GM12878 (cell line): ENCODE measurements at regions of chr17 and their contacts with region 1.

Region 1: DNA sequence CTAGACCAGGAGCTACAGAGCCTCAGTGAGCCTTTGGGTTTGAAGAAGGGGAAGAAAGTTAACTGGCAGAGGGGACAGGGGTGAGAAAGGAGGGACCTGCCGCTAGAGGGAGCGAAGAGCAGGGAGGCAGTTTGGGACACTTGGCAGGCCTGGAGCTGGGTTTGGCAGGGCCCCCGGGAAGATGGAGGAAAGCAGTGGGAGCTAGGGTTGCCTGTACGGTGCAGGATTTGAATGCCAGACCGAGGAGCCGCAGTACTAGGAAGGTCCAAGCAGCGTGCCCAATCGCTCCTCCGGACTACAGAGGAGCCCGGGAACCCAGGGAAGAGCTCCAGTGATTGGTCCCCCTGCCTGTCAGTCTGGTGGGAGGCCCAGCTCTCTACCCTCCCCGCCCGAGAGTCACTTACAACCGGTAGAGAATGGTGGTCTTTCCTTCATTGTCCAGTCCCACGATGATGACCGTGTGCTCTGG is 1.3 kb downstream of the ARL5C start:
- DNase-seq: peak; percentile 53
- ATAC-seq: peak; percentile 98
- H3K4me3 ChIP-seq: peak overlapping the region; percentile 71
- H3K27ac ChIP-seq: no peak overlapping the region
- H3K4me1 ChIP-seq: peaks cover 9% of the 10 kb centered on the region
- H3K27me3 ChIP-seq: peaks cover 0 to 2% of the 10 kb centered on the region in 2 experiments; a peak in 2 of 4 replicates
- CTCF ChIP-seq: peak; percentile 83 to 95 (median 89)
- EP300 ChIP-seq: no peak
- POLR2A ChIP-seq: no peak
- RAD21 ChIP-seq: peak; percentile 33; the same call in 1 of the 2 replicates

Region 2: GRCh38 chr17:39118674-39119419 is 45.9 kb before region 1 on chr17:
- CTCF ChIA-PET with region 1: interaction called, 12 read pairs
- POLR2A ChIA-PET with region 1: no interaction called
- RAD21 ChIA-PET with region 1: no interaction called
- SMC1A ChIA-PET with region 1: interaction called, 4 read pairs
- in situ Hi-C with region 1: no loop called
- intact Hi-C with region 1: no loop called
- DNase-seq: peak; percentile 84
- ATAC-seq: peak; percentile 97
- H3K4me3 ChIP-seq: no peak overlapping the region
- H3K27ac ChIP-seq: no peak overlapping the region
- H3K4me1 ChIP-seq: peaks cover 13% of the 10 kb centered on the region
- H3K27me3 ChIP-seq: no peaks in the 10 kb centered on the region
- CTCF ChIP-seq: no peak
- EP300 ChIP-seq: peak; percentile 33 to 85; a peak in 2 of 4 replicates
- POLR2A ChIP-seq: no peak
- RAD21 ChIP-seq: no peak

Region 3: DNA sequence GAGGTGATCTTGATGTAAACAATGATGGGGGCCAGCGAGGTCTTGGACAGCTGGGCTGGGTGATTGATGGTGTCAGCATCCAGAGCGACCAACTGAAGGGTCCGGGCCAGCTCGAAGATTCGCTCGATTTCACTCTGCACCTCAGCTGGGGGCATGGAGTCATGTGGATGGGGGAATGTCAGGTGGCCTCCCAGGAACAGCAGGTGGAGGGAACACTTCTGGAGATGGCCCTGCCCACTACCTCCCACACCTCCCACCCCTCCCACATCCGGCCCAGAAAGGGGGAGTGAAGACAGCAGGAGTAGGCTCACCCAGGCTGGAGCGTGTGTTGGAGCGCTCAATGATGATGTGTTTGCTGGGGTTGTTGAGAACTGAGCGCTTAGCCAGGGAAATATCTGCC is 19.0 kb after region 1 on chr17:
- CTCF ChIA-PET with region 1: interaction called, 21 read pairs
- POLR2A ChIA-PET with region 1: no interaction called
- RAD21 ChIA-PET with region 1: interaction called, 3 read pairs
- SMC1A ChIA-PET with region 1: no interaction called
- in situ Hi-C with region 1: no loop called
- intact Hi-C with region 1: no loop called
- DNase-seq: no peak
- ATAC-seq: no peak
- H3K4me3 ChIP-seq: no peak overlapping the region
- H3K27ac ChIP-seq: no peak overlapping the region
- H3K4me1 ChIP-seq: no peaks in the 10 kb centered on the region
- H3K27me3 ChIP-seq: no peaks in the 10 kb centered on the region
- CTCF ChIP-seq: no peak
- EP300 ChIP-seq: no peak
- POLR2A ChIP-seq: no peak
- RAD21 ChIP-seq: no peak

Region 4: DNA sequence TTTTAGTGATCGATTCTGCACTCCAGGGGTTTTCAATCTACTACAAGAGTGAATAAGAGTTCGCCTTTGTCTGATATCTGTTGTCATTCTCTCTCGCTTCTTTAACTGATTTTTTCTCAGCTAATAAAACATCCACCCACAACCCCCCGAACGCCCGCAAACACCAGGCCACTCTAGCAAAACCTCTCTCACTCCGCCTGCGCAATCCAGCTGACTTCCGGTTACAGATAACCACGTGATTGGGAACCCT is 35.0 kb after region 1 on chr17:
- CTCF ChIA-PET with region 1: interaction called, 20 read pairs
- POLR2A ChIA-PET with region 1: interaction called, 4 read pairs
- RAD21 ChIA-PET with region 1: interaction called, 11 read pairs
- SMC1A ChIA-PET with region 1: interaction called, 3 read pairs
- in situ Hi-C with region 1: no loop called
- intact Hi-C with region 1: no loop called
- DNase-seq: peak; percentile 81
- ATAC-seq: peak; percentile 65
- H3K4me3 ChIP-seq: peak overlapping the region; percentile 95
- H3K27ac ChIP-seq: peak overlapping the region; percentile 100
- H3K4me1 ChIP-seq: peaks cover 27% of the 10 kb centered on the region
- H3K27me3 ChIP-seq: no peaks in the 10 kb centered on the region
- CTCF ChIP-seq: no peak
- EP300 ChIP-seq: no peak
- POLR2A ChIP-seq: no peak
- RAD21 ChIP-seq: no peak

Region 5: DNA sequence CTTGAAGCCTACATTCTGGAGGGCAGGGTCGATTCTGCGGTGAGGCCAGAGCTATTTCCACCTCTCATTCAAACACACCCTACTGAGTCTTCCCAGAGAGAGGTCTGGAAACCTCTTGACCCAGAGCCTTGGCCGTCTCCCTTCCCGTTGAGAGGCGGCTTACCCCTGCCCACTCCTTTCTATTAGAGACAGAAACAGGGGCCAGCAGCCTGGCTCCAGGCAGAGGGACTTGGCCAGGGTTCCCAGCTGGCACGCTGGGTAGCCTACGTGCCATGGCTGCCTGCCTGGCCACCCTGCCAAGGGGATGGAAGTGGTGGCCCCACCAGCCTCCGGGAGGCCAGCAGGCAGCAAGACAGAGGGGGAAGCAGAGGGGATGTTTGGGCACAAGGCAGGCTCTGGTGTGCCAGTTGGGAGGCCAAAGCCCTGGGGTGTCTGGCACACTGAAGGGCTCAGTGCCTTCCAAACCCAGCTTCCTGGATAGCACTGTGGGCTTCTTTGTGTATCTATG is 55.0 kb after region 1 on chr17:
- CTCF ChIA-PET with region 1: no interaction called
- POLR2A ChIA-PET with region 1: no interaction called
- RAD21 ChIA-PET with region 1: no interaction called
- SMC1A ChIA-PET with region 1: no interaction called
- in situ Hi-C with region 1: no loop called
- intact Hi-C with region 1: no loop called
- DNase-seq: no peak
- ATAC-seq: no peak
- H3K4me3 ChIP-seq: no peak overlapping the region
- H3K27ac ChIP-seq: no peak overlapping the region
- H3K4me1 ChIP-seq: no peaks in the 10 kb centered on the region
- H3K27me3 ChIP-seq: peaks cover 1 to 6% of the 10 kb centered on the region in 2 experiments; a peak in 3 of 4 replicates
- CTCF ChIP-seq: no peak
- EP300 ChIP-seq: no peak
- POLR2A ChIP-seq: no peak
- RAD21 ChIP-seq: no peak

Region 6: DNA sequence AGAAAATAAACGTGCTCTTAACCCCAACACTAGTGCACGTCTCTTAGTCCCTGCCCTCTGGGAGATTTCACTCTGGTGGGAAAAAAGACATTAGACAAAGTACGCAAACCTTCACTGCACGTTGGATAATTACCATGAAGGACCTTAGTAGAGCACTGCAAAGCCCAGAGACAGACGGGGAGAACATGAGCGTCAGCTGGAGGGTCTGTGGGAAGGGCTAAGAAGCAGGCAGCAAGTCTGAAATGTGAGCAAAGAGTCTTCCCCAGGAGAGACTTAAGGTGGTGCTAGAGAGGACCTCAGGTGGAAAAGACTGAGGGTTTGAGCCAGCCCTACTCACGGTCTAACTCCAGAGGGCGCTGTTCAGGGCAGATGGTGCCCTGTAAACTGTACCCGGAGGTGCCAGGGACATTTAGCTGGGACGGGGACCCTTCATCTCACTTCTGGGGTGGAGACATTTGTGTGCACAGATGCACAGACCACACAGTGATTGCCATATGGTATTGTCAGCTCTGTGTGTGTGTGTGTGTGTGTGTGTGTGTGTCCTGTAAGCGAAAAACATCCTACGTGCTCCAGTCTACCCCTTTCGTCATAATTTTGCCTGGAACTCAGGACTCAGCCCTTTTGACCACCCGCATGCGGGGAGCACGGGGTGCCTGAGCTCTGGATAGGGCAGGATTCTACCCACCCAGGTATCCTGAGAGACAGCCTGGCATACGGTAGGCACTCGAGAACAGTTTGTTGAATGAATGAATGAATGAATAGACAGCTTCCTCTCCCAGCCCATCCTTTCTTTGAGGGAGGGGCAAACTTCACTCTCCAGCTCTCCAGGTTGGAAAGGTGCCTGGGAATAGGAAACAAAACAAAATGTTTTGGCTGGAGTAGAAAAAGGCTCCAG is 71.1 kb after region 1 on chr17:
- CTCF ChIA-PET with region 1: interaction called, 18 read pairs
- POLR2A ChIA-PET with region 1: no interaction called
- RAD21 ChIA-PET with region 1: interaction called, 8 read pairs
- SMC1A ChIA-PET with region 1: interaction called, 3 read pairs
- in situ Hi-C with region 1: no loop called
- intact Hi-C with region 1: no loop called
- DNase-seq: peak; percentile 24
- ATAC-seq: peak; percentile 88
- H3K4me3 ChIP-seq: no peak overlapping the region
- H3K27ac ChIP-seq: no peak overlapping the region
- H3K4me1 ChIP-seq: no peaks in the 10 kb centered on the region
- H3K27me3 ChIP-seq: no peaks in the 10 kb centered on the region; a peak in 3 of 4 replicates
- CTCF ChIP-seq: peak; percentile 63 to 95 (median 86)
- EP300 ChIP-seq: no peak
- POLR2A ChIP-seq: no peak
- RAD21 ChIP-seq: peak; percentile 31; the same call in 1 of the 2 replicates